ENCODE measurements at regions of chr2 and their contacts with region 1.

Region 1: DNA sequence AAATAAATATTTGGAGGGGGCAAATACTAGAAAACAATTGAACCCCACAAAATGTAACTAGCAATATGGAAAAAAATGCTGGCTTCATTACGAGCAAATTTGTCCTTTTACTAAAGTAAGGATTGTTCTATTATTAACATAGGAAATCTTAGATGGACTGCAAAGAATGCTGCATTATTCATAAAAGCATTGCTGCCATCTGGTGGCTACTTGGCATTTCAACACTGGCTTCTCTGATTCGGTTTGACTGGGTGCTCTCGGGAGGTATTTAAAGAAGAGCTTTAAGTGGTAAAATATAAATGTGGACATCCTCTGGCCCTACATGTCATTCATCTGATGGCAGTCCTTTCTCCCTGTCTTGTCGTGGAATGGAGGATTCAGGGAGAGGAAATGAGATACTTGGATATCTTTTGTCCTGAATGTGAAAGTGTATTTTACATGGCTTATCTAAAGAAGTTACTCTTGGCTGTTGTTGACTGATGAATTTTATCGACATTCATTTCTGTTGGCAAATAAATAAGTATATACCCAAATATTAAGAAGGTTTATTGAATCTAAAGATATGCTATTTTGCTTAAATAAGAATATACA is 130.2 kb downstream of the ARHGAP15 start:
- DNase-seq: peak; percentile 71 to 78 (median 74)
- H3K4me3 ChIP-seq: peak overlapping the region; percentile 7 to 40
- H3K4me3 Mint-ChIP-seq: peak overlapping the region; percentile 74 to 87 (median 84)
- H3K27ac ChIP-seq: peak overlapping the region; percentile 56
- H3K27ac Mint-ChIP-seq: peak overlapping the region; percentile 73 to 99 (median 86)
- H3K4me1 ChIP-seq: peaks cover 98% of the 10 kb centered on the region
- H3K4me1 Mint-ChIP-seq: peaks cover 59 to 78% (median 70%) of the 10 kb centered on the region in 4 donors
- H3K27me3 ChIP-seq: no peaks in the 10 kb centered on the region
- H3K27me3 Mint-ChIP-seq: no peaks in the 10 kb centered on the region

Region 2: DNA sequence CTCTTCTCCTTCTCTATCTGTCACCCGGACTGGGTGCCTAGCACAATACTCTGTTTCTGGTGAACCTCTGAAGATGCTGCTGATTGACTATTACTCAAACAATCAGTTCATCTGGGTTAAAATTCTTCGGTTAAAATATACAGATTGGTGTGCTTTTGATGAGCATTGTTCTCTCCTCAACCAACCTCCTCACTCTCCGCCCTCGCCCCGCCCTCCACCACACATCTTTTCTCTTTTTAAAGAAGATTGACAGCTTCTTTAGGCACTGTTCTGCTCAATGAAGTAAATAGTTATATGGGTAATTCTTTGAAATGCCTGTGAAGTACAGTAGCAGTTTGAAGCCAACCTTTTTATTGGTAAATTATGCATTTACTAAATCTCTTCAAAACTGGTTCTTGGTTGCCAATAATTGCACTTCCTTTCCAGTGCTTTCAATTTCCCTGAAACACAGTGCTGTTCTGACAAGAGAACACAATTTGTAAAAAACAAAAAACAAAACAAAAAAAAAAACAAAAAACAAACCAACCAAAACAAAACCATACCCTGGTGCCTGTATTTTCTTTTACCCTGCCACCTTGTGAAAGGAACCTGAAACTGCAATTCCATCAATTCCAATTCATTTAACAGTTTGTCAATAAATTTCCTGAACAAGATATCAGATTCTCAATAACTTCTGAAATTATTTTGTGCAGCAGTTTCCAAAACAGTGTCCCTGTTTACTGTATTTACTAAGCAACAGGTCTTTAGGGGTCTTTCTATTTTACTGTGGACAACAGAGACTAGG is 1317.3 kb before region 1 on chr2:
- CTCF ChIA-PET with region 1: no interaction called
- POLR2A ChIA-PET with region 1: no interaction called
- intact Hi-C with region 1: no loop called
- DNase-seq: no peak
- H3K4me3 ChIP-seq: no peak overlapping the region
- H3K4me3 Mint-ChIP-seq: no peak overlapping the region
- H3K27ac ChIP-seq: no peak overlapping the region
- H3K27ac Mint-ChIP-seq: no peak overlapping the region
- H3K4me1 ChIP-seq: no peaks in the 10 kb centered on the region
- H3K4me1 Mint-ChIP-seq: no peaks in the 10 kb centered on the region
- H3K27me3 ChIP-seq: no peaks in the 10 kb centered on the region
- H3K27me3 Mint-ChIP-seq: no peaks in the 10 kb centered on the region

Region 3: DNA sequence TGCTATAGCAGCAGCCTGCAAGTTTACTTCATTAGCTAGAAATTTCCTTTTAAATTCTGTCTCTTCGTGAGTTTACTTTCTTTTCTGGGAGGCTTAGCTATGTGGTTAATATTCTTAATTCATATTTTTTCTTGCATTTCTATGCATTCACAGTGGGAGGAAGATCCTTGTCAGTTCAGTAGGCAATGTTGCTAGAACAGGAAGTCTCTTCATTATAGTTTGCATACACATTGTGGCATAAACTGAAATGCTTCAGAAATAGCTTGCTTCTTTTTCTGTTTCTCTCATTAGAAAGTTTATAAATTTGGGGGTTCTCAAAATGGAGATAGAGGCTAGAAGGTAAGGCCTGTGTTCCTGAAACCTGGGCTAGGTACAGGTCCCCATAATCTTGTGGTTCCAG is 138.4 kb before region 1 on chr2:
- CTCF ChIA-PET with region 1: interaction called, 21 read pairs
- POLR2A ChIA-PET with region 1: interaction called, 96 read pairs
- intact Hi-C with region 1: no loop called
- DNase-seq: no peak
- H3K4me3 ChIP-seq: no peak overlapping the region
- H3K4me3 Mint-ChIP-seq: peak overlapping the region in 7 of 8 donors; percentile 10 to 78 (median 27)
- H3K27ac ChIP-seq: no peak overlapping the region
- H3K27ac Mint-ChIP-seq: peak overlapping the region in 3 of 7 donors; percentile 18 to 69 (median 29)
- H3K4me1 ChIP-seq: peaks cover 44% of the 10 kb centered on the region
- H3K4me1 Mint-ChIP-seq: peaks cover 0 to 21% (median 9%) of the 10 kb centered on the region in 4 donors
- H3K27me3 ChIP-seq: no peaks in the 10 kb centered on the region
- H3K27me3 Mint-ChIP-seq: no peaks in the 10 kb centered on the region

Region 4: DNA sequence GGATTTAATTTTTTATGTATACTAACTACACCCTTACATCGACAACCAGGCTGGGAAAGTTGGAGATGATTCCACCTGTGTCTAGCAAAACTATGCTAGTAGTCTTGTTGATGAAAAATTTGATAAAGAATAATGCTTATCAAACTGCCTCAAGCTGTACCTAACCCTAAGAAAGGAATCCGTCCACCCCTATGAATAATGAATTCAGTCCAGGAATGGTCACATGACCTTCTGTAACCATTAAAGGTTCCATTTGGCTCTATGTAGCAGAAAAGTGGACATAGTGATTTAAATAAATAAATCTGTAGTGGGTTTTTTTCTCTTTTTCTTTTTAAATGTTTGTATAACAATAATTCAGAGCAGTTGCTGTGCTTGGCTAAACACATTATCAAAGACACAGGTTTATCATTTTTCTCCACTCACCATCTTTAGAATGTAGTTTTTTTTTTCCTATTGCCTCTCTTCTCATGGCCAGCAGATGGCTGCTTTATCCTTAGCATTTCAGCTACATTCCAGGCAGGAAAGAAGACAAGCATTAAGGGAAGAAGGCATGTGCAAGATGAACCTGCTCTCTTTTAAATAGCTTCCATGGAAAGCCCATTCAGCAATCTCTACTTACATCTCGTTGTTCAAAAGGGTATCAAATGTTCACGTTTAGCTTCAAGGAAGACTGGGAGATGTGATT is 87.8 kb before region 1 on chr2:
- CTCF ChIA-PET with region 1: interaction called, 17 read pairs
- POLR2A ChIA-PET with region 1: interaction called, 12 read pairs
- intact Hi-C with region 1: no loop called
- DNase-seq: no peak
- H3K4me3 ChIP-seq: no peak overlapping the region
- H3K4me3 Mint-ChIP-seq: peak overlapping the region in 2 of 8 donors; percentile 13 to 16
- H3K27ac ChIP-seq: no peak overlapping the region
- H3K27ac Mint-ChIP-seq: peak overlapping the region; percentile 5 to 93 (median 53)
- H3K4me1 ChIP-seq: peaks cover 71% of the 10 kb centered on the region
- H3K4me1 Mint-ChIP-seq: peaks cover 61 to 78% (median 71%) of the 10 kb centered on the region in 4 donors
- H3K27me3 ChIP-seq: no peaks in the 10 kb centered on the region
- H3K27me3 Mint-ChIP-seq: no peaks in the 10 kb centered on the region

Region 5: DNA sequence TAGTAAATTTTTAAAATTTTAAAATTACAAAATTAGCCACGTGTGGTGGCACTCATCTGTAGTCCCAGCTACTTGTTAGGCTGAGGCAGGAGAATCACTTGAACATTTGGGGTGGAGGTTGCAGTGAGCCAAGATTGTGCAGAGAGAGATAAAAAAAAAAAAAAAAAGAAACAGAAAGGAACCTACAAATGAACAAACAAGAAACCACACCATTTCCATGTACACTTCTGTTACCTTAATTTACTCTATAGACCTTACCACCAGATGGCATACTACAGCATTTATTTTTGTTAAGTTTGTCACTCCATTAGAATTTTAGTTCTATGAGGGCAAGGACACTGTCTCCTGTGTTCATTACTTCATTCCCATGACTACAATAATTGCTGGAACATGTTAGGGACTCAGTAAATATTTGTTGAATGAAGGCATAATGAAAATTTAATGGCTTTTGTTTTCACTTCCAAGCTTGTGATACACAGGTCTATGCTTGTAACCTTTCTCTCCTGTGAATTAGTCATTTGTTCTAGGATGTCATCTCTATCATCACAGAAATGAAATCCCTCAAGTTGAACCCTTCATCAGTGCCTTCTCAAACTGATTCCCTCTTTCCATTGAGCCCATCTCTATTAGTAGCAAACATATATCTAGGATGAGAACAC is 54.2 kb before region 1 on chr2:
- CTCF ChIA-PET with region 1: interaction called, 162 read pairs
- POLR2A ChIA-PET with region 1: interaction called, 32 read pairs
- intact Hi-C with region 1: loop called (anchors 1 kb)
- DNase-seq: peak in 4 of 5 donors; percentile 54 to 60 (median 57)
- H3K4me3 ChIP-seq: no peak overlapping the region
- H3K4me3 Mint-ChIP-seq: peak overlapping the region in 4 of 8 donors; percentile 16 to 64 (median 34)
- H3K27ac ChIP-seq: no peak overlapping the region
- H3K27ac Mint-ChIP-seq: peak overlapping the region in 5 of 7 donors; percentile 39 to 77 (median 67)
- H3K4me1 ChIP-seq: peaks cover 42% of the 10 kb centered on the region
- H3K4me1 Mint-ChIP-seq: peaks cover 55 to 66% (median 57%) of the 10 kb centered on the region in 4 donors
- H3K27me3 ChIP-seq: no peaks in the 10 kb centered on the region
- H3K27me3 Mint-ChIP-seq: no peaks in the 10 kb centered on the region

Region 6: GRCh38 chr2:143230506-143231253 is 28.8 kb before region 1 on chr2:
- CTCF ChIA-PET with region 1: interaction called, 112 read pairs
- POLR2A ChIA-PET with region 1: interaction called, 15 read pairs
- intact Hi-C with region 1: no loop called
- DNase-seq: no peak
- H3K4me3 ChIP-seq: no peak overlapping the region
- H3K4me3 Mint-ChIP-seq: peak overlapping the region in 2 of 8 donors; percentile 54 to 58
- H3K27ac ChIP-seq: no peak overlapping the region
- H3K27ac Mint-ChIP-seq: peak overlapping the region in 2 of 7 donors; percentile 13 to 72
- H3K4me1 ChIP-seq: peaks cover 26% of the 10 kb centered on the region
- H3K4me1 Mint-ChIP-seq: peaks cover 19 to 46% (median 25%) of the 10 kb centered on the region in 4 donors
- H3K27me3 ChIP-seq: no peaks in the 10 kb centered on the region
- H3K27me3 Mint-ChIP-seq: no peaks in the 10 kb centered on the region

Region 7: DNA sequence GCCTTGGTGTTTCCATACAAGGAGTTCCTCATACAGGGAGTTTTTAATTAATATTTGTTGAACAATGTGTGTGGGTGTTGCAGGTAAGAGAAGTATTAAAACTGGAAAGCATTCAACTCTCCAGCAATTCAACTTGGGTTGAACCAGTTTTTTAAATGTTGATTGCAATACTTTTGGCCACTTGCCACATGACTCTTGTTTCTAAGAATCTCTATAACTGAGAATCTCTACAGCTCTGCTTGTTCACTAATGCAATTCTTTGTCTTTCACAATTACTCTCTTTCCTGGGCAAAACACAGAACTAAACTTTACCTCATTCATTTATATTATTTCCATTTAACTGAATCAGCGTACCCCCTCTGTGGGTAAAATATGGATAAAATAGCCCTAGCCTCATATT is 299.2 kb after region 1 on chr2:
- CTCF ChIA-PET with region 1: no interaction called
- POLR2A ChIA-PET with region 1: no interaction called
- intact Hi-C with region 1: no loop called
- DNase-seq: no peak
- H3K4me3 ChIP-seq: no peak overlapping the region
- H3K4me3 Mint-ChIP-seq: no peak overlapping the region
- H3K27ac ChIP-seq: no peak overlapping the region
- H3K27ac Mint-ChIP-seq: peak overlapping the region in 3 of 7 donors; percentile 19 to 53 (median 33)
- H3K4me1 ChIP-seq: no peaks in the 10 kb centered on the region
- H3K4me1 Mint-ChIP-seq: peaks cover 8 to 19% (median 13%) of the 10 kb centered on the region in 4 donors
- H3K27me3 ChIP-seq: no peaks in the 10 kb centered on the region
- H3K27me3 Mint-ChIP-seq: no peaks in the 10 kb centered on the region

Measured in CD4-positive, alpha-beta memory T cell (primary cell).